Activated naive CD4-positive, alpha-beta T cell treated with anti-CD3 and anti-CD28 coated beads for 36 hours (primary cell): ENCODE measurements at regions of chr5 and their contacts with region 1.

Region 1: DNA sequence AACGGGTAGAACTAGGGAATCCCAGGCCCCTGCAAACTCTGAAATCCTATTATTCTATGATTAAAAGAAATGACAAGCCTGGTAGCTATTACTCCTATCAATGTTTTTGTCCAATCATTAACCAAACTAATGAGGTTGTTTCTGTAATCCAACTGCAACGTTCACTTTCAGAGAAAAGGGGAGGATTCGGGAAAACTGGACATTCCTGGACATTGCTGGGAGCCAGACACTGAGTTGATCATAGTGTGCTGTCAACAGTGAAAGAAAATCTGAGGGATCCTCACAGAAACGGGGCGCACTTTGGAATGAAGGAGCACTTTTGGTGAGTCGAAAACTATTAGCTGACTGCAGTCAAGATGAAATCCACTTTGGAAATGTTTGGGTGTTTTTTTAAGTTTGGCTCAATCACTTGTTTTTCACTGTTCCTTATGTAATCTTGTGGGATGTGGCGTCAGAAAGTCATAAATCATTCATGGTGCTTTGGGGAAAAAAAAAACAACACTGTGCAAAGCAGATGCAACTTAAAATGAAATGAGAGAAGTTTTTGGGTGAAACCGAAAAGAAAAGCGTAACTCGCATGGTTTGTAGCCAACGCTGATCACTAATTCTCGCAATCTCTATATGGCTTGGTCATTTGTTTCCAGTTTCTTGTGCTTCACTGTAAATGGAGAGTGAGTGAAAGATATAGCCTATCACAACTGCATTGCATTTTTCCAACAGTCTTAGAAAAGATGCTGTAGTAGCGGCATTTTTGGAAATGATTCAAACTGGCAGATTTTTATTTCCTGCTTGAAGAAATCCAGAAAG is 51.2 kb upstream of the ADRA1B start:
- DNase-seq: no peak
- H3K4me3 Mint-ChIP-seq: no peak overlapping the region
- H3K27ac Mint-ChIP-seq: no peak overlapping the region
- H3K4me1 Mint-ChIP-seq: peaks cover 5% of the 10 kb centered on the region
- H3K27me3 Mint-ChIP-seq: peaks cover 43% of the 10 kb centered on the region

Region 2: GRCh38 chr5:159262859-159263567 is 602.1 kb before region 1 on chr5 and contains the start of gene UBLCP1:
- CTCF ChIA-PET with region 1: no interaction called
- intact Hi-C with region 1: loop called (anchors 1 kb)
- DNase-seq: peak; percentile 82
- H3K4me3 Mint-ChIP-seq: peak within 1 kb of the TSS; percentile 96
- H3K27ac Mint-ChIP-seq: peak within 1 kb of the TSS; percentile 99
- H3K4me1 Mint-ChIP-seq: peaks cover 29% of the 10 kb centered on the region
- H3K27me3 Mint-ChIP-seq: no peaks in the 10 kb centered on the region
- total RNA-seq, gene UBLCP1: 22.7 to 23.0 TPM

Region 3: GRCh38 chr5:159786901-159787691 is 78.0 kb before region 1 on chr5:
- CTCF ChIA-PET with region 1: no interaction called
- intact Hi-C with region 1: no loop called
- DNase-seq: no peak
- H3K4me3 Mint-ChIP-seq: no peak overlapping the region
- H3K27ac Mint-ChIP-seq: no peak overlapping the region
- H3K4me1 Mint-ChIP-seq: no peaks in the 10 kb centered on the region
- H3K27me3 Mint-ChIP-seq: peaks cover 19% of the 10 kb centered on the region

Region 4: GRCh38 chr5:159975462-159976019 is 110.5 kb after region 1 on chr5:
- CTCF ChIA-PET with region 1: no interaction called
- intact Hi-C with region 1: no loop called
- DNase-seq: no peak
- H3K4me3 Mint-ChIP-seq: no peak overlapping the region
- H3K27ac Mint-ChIP-seq: no peak overlapping the region
- H3K4me1 Mint-ChIP-seq: peaks cover 10% of the 10 kb centered on the region
- H3K27me3 Mint-ChIP-seq: peaks cover 53% of the 10 kb centered on the region